ENCODE measurements at regions of chr3 and their contacts with region 1.

Region 1: DNA sequence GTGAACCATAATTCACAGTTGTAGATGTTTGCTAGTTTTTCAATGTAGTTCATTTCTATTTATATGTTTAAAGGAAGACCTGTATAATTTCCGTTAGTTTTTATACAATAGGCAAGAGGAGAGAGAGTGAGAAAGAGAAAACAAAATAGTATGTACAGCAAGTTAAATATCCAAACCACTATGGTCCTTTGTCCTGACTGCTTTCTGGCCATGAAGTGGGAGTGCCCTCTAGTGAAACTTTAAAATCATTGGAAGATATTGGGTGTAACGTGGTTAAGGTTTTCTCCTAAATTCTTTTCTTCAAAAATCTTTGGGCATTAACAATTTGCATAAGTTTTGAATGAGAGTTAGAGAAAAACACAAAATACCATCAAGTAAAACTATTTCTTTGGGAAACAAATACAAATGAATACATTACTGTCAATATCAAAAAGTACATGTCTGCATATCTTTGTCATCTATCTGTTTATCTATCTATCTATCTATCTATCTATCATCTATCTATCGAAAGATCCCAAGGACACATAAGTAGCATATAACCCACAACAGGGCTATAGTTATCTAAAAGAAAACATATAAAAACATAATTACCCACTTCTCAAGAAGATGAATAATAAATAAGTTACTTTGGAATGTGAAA is 534.6 kb upstream of the ATP11B start:
- DNase-seq: peak; percentile 31
- H3K4me3 ChIP-seq: no peak overlapping the region
- H3K27ac ChIP-seq: no peak overlapping the region
- H3K4me1 ChIP-seq: peaks cover 3% of the 10 kb centered on the region
- H3K27me3 ChIP-seq: no peaks in the 10 kb centered on the region
- CTCF ChIP-seq: peak; percentile 59 to 83

Region 2: DNA sequence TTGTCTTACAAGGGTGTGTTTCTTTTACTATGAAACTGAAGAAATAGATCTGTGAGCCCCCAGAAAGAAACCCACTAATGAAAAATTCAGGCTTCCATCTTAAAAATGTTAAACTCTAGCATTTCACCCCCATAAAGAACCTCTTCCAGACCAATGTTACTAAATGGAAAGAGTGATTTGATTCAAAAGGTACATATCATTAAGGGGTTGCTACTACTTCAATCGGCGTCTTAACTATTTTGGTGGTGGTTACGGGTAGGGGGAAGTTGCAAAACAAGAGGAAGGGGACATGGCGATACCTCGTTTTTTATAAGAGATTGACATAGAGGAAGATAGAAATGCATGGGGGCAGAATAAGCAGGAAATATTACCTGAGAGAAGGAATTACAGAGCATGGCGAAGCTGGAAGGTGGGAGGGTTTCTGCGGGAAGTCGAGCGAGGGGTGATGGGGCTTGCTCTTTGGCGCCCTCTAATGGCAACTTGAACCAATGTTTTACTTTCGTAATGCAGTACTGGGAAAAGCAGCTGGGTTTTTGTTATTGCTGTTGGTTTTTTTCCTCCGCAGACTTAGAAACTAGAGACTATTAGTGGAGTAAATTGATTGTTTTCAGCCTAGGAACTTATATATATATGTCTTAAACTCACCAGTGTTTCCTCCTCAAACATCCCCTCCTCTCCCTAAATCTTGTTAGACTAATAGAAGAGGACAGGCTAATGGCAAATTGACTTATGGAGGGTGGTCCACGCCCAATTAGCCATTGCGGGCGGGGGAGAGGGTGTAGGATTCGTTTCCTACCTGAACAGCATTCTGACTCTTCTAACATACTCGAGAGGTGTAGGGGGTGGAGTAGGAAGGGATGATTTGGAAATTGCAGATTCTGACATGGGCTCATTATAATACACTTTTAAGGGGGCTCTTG is 558.2 kb before region 1 on chr3:
- CTCF ChIA-PET with region 1: no interaction called
- dilution Hi-C with region 1: no loop called
- in situ Hi-C with region 1: loop called (anchors 10 to 25 kb)
- intact Hi-C with region 1: no loop called
- DNase-seq: peak; percentile 66
- H3K4me3 ChIP-seq: peak overlapping the region in 2 of 3 experiments; percentile 10 to 34
- H3K27ac ChIP-seq: no peak overlapping the region
- H3K4me1 ChIP-seq: peaks cover 28% of the 10 kb centered on the region
- H3K27me3 ChIP-seq: peaks cover 25% of the 10 kb centered on the region
- CTCF ChIP-seq: peak; percentile 87 to 88

Region 3: DNA sequence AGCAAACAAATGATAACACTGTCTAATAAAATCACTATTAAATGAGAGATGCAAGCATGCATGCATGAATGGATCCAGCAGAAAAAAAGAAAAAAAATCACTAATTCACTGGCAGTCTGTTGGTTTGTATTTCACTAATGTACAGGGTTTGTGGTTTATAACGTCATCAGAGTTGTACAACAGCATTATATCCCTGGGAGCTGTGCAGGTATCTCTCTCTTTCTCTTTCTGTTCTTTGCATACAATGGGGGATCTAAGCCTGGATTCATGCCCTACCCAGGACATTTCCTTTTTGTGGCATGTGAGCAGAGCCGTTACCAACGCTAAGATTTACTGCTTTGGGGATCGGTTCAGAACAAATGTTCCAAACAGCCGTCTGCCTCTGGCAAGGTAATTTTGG is 317.4 kb before region 1 on chr3:
- CTCF ChIA-PET with region 1: no interaction called
- dilution Hi-C with region 1: no loop called
- in situ Hi-C with region 1: loop called in 1 of 2 experiments (anchors 10 kb)
- intact Hi-C with region 1: no loop called
- DNase-seq: peak; percentile 23
- H3K4me3 ChIP-seq: no peak overlapping the region
- H3K27ac ChIP-seq: no peak overlapping the region
- H3K4me1 ChIP-seq: no peaks in the 10 kb centered on the region
- H3K27me3 ChIP-seq: no peaks in the 10 kb centered on the region
- CTCF ChIP-seq: no peak

Region 4: DNA sequence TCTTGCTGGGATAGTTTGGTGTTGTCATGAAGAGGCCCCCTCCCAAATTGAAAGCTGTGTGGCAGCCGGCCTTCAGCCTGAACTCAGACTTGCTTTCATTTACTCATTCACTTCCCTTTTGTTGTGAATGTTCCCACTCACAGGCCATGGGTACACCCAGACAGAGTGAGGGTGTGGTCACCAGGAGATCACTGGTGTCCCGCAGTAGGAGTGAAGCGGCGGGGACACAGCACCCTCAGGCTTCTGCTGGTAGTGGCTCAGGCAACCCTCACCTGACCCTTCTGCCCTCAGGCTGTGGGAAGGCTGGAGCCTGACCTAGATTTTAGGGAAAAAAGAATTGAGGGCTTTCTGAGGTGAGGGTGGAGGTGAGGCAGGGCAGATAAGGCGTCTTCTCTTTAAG is 302.5 kb before region 1 on chr3:
- CTCF ChIA-PET with region 1: no interaction called
- dilution Hi-C with region 1: no loop called
- in situ Hi-C with region 1: loop called in 1 of 2 experiments (anchors 10 kb)
- intact Hi-C with region 1: no loop called
- DNase-seq: no peak
- H3K4me3 ChIP-seq: no peak overlapping the region
- H3K27ac ChIP-seq: no peak overlapping the region
- H3K4me1 ChIP-seq: no peaks in the 10 kb centered on the region
- H3K27me3 ChIP-seq: no peaks in the 10 kb centered on the region
- CTCF ChIP-seq: no peak

Region 5: DNA sequence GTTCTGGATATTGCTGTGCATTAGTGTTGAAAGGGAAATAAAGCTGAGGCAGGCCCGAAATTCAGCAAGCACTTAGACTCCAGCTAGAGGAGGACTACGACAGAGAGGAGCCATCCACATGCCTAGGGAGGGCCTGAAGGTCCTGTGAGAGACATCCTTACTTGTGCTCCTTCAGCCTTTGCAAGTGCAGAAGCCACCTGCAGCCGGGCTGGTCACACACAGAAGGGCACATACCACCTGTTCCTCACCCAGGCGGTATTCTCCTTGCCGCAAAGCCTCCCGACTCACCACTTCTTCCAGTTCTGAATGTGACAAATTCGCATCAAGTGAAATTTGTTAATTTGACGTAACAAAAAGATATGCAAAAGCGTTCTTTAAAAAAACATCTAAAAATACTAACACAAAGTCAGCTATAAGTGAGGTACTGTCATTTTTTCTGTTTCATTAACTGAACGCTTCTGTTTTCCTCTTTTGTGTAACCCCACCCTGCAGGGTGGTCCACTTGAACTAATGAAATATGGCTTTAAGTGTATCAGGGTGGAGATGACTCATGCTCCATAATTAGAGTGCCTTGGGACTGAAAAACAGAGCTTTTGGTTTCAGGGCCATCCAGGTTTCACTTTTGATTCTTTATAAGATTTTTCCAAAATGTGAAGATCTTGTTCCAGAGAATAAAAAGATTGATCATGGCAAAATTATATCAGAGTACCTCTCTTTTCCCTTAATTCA is 66.7 kb after region 1 on chr3:
- CTCF ChIA-PET with region 1: no interaction called
- dilution Hi-C with region 1: no loop called
- in situ Hi-C with region 1: no loop called
- intact Hi-C with region 1: no loop called
- DNase-seq: peak; percentile 17
- H3K4me3 ChIP-seq: no peak overlapping the region
- H3K27ac ChIP-seq: no peak overlapping the region
- H3K4me1 ChIP-seq: peaks cover 8% of the 10 kb centered on the region
- H3K27me3 ChIP-seq: no peaks in the 10 kb centered on the region
- CTCF ChIP-seq: no peak

Region 6: DNA sequence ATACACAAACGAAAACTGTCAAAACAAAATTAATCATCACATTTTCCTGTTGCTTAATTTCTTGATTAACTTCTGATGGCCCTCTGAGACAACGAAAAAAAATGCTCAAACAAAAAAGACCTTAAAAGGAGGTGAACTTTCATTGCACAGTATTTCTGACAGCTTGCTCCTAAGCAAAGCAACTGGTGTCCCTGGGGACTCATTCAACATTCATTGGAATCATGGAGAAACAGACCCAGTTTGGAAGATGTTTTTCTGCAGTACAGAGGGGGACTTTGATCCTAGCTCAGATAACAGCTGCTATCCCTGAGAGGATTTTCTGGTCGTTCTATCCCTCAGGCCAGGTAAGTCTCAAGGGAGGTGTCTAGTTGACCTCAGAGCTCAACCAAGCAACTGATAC is 155.9 kb after region 1 on chr3:
- CTCF ChIA-PET with region 1: no interaction called
- dilution Hi-C with region 1: no loop called
- in situ Hi-C with region 1: no loop called
- intact Hi-C with region 1: no loop called
- DNase-seq: no peak
- H3K4me3 ChIP-seq: no peak overlapping the region
- H3K27ac ChIP-seq: no peak overlapping the region
- H3K4me1 ChIP-seq: peaks cover 18% of the 10 kb centered on the region
- H3K27me3 ChIP-seq: no peaks in the 10 kb centered on the region
- CTCF ChIP-seq: no peak

Region 7: GRCh38 chr3:182464513-182465145 is 206.0 kb after region 1 on chr3:
- CTCF ChIA-PET with region 1: no interaction called
- dilution Hi-C with region 1: no loop called
- in situ Hi-C with region 1: no loop called
- intact Hi-C with region 1: no loop called
- DNase-seq: no peak
- H3K4me3 ChIP-seq: no peak overlapping the region
- H3K27ac ChIP-seq: no peak overlapping the region
- H3K4me1 ChIP-seq: no peaks in the 10 kb centered on the region
- H3K27me3 ChIP-seq: no peaks in the 10 kb centered on the region
- CTCF ChIP-seq: no peak